ENCODE measurements at regions of chr1 and their contacts with region 1.

Region 1: DNA sequence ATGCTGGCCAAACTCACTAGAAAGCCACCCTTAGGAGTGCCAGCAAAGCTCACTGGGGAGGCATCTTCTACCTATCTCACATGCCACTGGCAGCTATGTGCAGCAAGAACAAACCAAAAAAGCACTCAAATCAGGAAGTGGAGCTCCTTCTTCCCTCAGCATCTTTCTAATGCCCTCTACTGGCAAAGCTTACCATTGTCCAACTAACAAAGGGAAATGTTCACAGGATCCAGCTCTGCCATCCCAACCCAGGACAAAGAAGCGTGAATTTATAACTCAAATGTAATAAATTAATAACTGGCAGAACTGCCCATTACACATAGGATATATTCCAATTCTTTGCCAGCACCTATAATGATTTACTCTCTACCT is 38.9 kb downstream of the LEPR start:
- DNase-seq: peak; percentile 45 to 70 (median 58)
- H3K4me3 ChIP-seq: no peak overlapping the region
- H3K27ac ChIP-seq: no peak overlapping the region
- H3K4me1 ChIP-seq: peaks cover 2 to 18% (median 2%) of the 10 kb centered on the region in 4 experiments
- H3K27me3 ChIP-seq: no peaks in the 10 kb centered on the region

Region 2: DNA sequence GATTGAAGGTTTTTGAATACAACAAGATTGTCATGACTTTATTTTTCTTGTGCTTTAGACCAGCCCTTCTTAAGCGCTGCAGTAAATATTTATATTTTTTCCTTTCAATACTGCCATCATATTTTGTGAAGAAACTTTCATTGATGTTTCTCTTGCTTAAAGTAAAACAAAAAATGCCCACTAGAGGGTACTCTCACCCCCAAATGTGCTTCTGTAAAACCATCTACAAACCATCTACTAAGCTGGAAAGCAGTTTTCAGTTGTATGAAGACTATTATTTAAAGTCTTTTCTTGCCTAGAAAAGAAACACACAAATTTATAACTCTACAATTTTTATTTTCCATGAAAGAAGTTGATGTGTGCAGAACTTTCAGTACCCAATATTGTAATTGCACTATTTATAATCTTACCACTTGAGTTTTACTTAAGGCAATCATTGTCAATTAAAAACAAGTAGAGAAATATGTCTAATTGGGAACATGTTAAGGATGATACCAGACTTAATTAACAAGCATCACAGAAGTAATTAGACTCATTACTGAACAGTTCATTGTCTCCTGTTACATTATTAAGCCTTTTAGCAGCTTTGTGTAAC is 28.2 kb before region 1 on chr1:
- CTCF ChIA-PET with region 1: interaction called, 14 read pairs
- POLR2A ChIA-PET with region 1: no interaction called
- DNase-seq: peak; percentile 58 to 80 (median 74)
- H3K4me3 ChIP-seq: peak overlapping the region in 1 of 7 experiments; percentile 13
- H3K27ac ChIP-seq: no peak overlapping the region
- H3K4me1 ChIP-seq: peaks cover 0 to 40% (median 20%) of the 10 kb centered on the region in 4 experiments
- H3K27me3 ChIP-seq: no peaks in the 10 kb centered on the region

Region 3: GRCh38 chr1:65469889-65470340 is 10.5 kb after region 1 on chr1:
- CTCF ChIA-PET with region 1: interaction called, 10 read pairs
- POLR2A ChIA-PET with region 1: no interaction called
- DNase-seq: no peak
- H3K4me3 ChIP-seq: no peak overlapping the region
- H3K27ac ChIP-seq: no peak overlapping the region
- H3K4me1 ChIP-seq: no peaks in the 10 kb centered on the region
- H3K27me3 ChIP-seq: no peaks in the 10 kb centered on the region

Measured in common myeloid progenitor, CD34-positive (primary cell).